MCF 10A (cell line): ENCODE measurements at regions of chr2 and their contacts with region 1.

Region 1: DNA sequence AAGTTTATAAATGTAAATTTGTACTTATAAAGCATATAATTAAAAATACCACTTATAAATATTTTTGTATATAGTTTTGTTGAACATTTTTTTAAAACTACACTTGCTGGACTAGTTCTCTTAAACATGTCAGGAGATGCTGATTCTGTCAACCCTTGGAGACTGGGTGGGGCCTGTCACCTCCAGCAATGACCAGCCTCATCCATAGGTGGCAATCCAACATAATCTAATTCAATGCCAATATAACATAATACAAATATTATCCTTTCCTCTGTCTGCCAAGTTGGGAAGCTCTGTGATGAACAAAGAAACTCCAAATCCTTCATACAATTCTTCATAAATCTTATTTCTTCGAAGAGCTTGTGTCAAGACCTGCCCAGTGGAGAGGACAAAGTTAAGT is 140.4 kb downstream of the RBMS1 start:
- DNase-seq: peak; percentile 54
- H3K4me3 Mint-ChIP-seq: no peak overlapping the region
- H3K27ac Mint-ChIP-seq: peak overlapping the region; percentile 38
- H3K4me1 Mint-ChIP-seq: peaks cover 63% of the 10 kb centered on the region
- H3K27me3 Mint-ChIP-seq: no peaks in the 10 kb centered on the region
- CTCF ChIP-seq: peak; percentile 40

Region 2: DNA sequence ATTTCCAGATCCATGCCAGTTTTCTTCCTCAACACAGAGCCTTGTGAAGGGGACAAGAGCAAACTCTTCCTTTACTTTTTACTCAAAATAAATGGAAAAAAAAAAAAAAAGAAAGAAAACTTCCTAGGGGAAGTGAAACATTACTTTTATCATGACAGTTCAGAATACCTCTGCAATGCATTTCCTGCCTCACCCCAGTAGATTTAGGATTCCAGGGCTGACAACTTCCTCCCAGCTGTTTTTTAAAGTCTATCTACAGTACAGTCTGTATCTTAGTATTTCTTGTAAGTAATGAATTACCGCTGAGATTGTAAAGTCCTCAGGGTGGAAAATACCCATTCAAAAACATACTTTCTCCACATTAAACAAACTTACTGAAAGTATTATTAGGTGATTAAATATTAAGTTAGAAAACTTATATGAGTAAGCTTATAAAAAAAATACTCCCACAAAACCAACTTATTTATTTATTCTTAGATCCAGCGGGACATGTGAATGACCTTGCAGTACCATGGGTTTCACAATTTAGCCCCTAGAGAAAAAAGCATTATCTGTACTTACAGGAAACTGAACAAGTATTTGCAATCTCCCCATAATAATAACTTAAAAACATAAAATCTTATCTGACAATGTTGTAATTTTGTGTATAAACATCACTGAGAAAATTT is 22.8 kb after region 1 on chr2:
- CTCF ChIA-PET with region 1: interaction called, 13 read pairs
- POLR2A ChIA-PET with region 1: interaction called, 43 read pairs
- intact Hi-C with region 1: no loop called
- DNase-seq: peak; percentile 57
- H3K4me3 Mint-ChIP-seq: peak overlapping the region; percentile 12
- H3K27ac Mint-ChIP-seq: peak overlapping the region; percentile 85
- H3K4me1 Mint-ChIP-seq: peaks cover 63% of the 10 kb centered on the region
- H3K27me3 Mint-ChIP-seq: no peaks in the 10 kb centered on the region
- CTCF ChIP-seq: no peak

Region 3: GRCh38 chr2:160406591-160407392 is 53.6 kb after region 1 on chr2:
- CTCF ChIA-PET with region 1: interaction called, 12 read pairs
- POLR2A ChIA-PET with region 1: interaction called, 62 read pairs
- intact Hi-C with region 1: loop called (anchors 2 kb)
- DNase-seq: peak; percentile 73
- H3K4me3 Mint-ChIP-seq: peak overlapping the region; percentile 92
- H3K27ac Mint-ChIP-seq: peak overlapping the region; percentile 85
- H3K4me1 Mint-ChIP-seq: peaks cover 39% of the 10 kb centered on the region
- H3K27me3 Mint-ChIP-seq: no peaks in the 10 kb centered on the region
- CTCF ChIP-seq: no peak

Region 4: GRCh38 chr2:160918906-160919503 is 565.8 kb after region 1 on chr2:
- CTCF ChIA-PET with region 1: interaction called, 3 read pairs
- POLR2A ChIA-PET with region 1: no interaction called
- intact Hi-C with region 1: loop called (anchors 1 kb)
- DNase-seq: peak; percentile 79
- H3K4me3 Mint-ChIP-seq: no peak overlapping the region
- H3K27ac Mint-ChIP-seq: no peak overlapping the region
- H3K4me1 Mint-ChIP-seq: no peaks in the 10 kb centered on the region
- H3K27me3 Mint-ChIP-seq: no peaks in the 10 kb centered on the region
- CTCF ChIP-seq: peak; percentile 71